ENCODE measurements at regions of chr9 and their contacts with region 1.

Region 1: GRCh38 chr9:28951944-28952343 is 1378.7 kb upstream of the C9orf72 start:
- DNase-seq: no peak
- ATAC-seq: no peak
- H3K4me3 ChIP-seq: no peak overlapping the region
- H3K4me3 Mint-ChIP-seq: no peak overlapping the region
- H3K27ac ChIP-seq: no peak overlapping the region
- H3K27ac Mint-ChIP-seq: no peak overlapping the region
- H3K4me1 ChIP-seq: no peaks in the 10 kb centered on the region
- H3K4me1 Mint-ChIP-seq: no peaks in the 10 kb centered on the region
- H3K27me3 ChIP-seq: no peaks in the 10 kb centered on the region
- H3K27me3 Mint-ChIP-seq: no peaks in the 10 kb centered on the region

Region 2: GRCh38 chr9:27600256-27600655 is 1351.7 kb before region 1 on chr9:
- CTCF ChIA-PET with region 1: interaction called in 1 of 2 experiments, 10 read pairs
- POLR2A ChIA-PET with region 1: no interaction called
- DNase-seq: no peak
- ATAC-seq: no peak
- H3K4me3 ChIP-seq: no peak overlapping the region
- H3K4me3 Mint-ChIP-seq: no peak overlapping the region
- H3K27ac ChIP-seq: no peak overlapping the region
- H3K27ac Mint-ChIP-seq: no peak overlapping the region
- H3K4me1 ChIP-seq: no peaks in the 10 kb centered on the region
- H3K4me1 Mint-ChIP-seq: no peaks in the 10 kb centered on the region
- H3K27me3 ChIP-seq: no peaks in the 10 kb centered on the region
- H3K27me3 Mint-ChIP-seq: peaks cover 4 to 12% of the 10 kb centered on the region in 2 donors

Region 3: DNA sequence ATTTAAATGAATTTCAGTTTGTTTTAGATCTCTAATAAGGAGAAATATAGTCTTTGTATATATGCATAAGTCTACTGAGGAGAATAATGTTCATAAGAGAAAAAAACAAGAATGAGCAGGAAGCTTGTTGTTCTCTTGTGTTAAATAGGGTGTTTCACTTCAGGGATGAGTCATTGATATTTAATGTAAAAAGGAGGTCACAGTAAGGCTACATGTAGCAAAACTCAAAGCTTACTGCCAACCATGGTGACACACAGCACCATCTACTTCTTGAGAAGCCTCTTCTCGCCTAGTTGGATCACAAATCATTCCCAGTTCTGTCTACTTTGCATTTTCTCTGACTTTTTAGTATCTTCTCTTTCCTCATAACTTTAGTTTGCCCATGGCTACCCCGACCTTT is 87.3 kb after region 1 on chr9:
- CTCF ChIA-PET with region 1: no interaction called
- POLR2A ChIA-PET with region 1: no interaction called
- DNase-seq: no peak
- ATAC-seq: no peak
- H3K4me3 ChIP-seq: no peak overlapping the region
- H3K4me3 Mint-ChIP-seq: no peak overlapping the region
- H3K27ac ChIP-seq: no peak overlapping the region
- H3K27ac Mint-ChIP-seq: no peak overlapping the region
- H3K4me1 ChIP-seq: no peaks in the 10 kb centered on the region
- H3K4me1 Mint-ChIP-seq: no peaks in the 10 kb centered on the region
- H3K27me3 ChIP-seq: no peaks in the 10 kb centered on the region
- H3K27me3 Mint-ChIP-seq: no peaks in the 10 kb centered on the region

Region 4: DNA sequence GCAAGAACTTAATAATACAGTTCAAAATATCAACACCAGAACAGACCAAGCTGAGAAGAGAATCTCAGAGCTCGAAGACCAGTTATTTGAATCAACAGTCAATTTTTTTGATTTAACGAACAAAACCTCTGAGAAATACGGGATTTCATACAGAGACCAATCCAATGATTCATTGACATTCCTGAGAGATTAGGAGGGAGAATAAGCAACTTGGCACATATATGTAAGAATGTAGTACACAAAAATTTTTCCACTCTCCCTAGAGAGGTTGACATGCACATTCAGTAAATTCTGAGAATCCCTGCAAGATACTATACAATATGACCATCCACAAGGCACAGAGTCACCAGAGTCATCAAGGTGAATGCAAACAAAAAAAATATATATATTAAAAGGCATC is 198.7 kb after region 1 on chr9:
- CTCF ChIA-PET with region 1: no interaction called
- POLR2A ChIA-PET with region 1: no interaction called
- DNase-seq: no peak
- ATAC-seq: no peak
- H3K4me3 ChIP-seq: no peak overlapping the region
- H3K4me3 Mint-ChIP-seq: no peak overlapping the region
- H3K27ac ChIP-seq: no peak overlapping the region
- H3K27ac Mint-ChIP-seq: no peak overlapping the region
- H3K4me1 ChIP-seq: no peaks in the 10 kb centered on the region
- H3K4me1 Mint-ChIP-seq: no peaks in the 10 kb centered on the region
- H3K27me3 ChIP-seq: no peaks in the 10 kb centered on the region
- H3K27me3 Mint-ChIP-seq: no peaks in the 10 kb centered on the region

Measured in T-cell (primary cell).